Caco-2 (cell line): ENCODE measurements at regions of chr10 and their contacts with region 1.

Region 1: GRCh38 chr10:82089333-82089732 is 214.3 kb downstream of the NRG3 start:
- DNase-seq: no peak
- H3K4me3 ChIP-seq: no peak overlapping the region
- H3K4me3 Mint-ChIP-seq: no peak overlapping the region
- H3K27ac Mint-ChIP-seq: no peak overlapping the region
- H3K4me1 ChIP-seq: no peaks in the 10 kb centered on the region
- H3K4me1 Mint-ChIP-seq: no peaks in the 10 kb centered on the region
- H3K27me3 ChIP-seq: no peaks in the 10 kb centered on the region
- H3K27me3 Mint-ChIP-seq: no peaks in the 10 kb centered on the region
- CTCF ChIP-seq: no peak

Region 2: GRCh38 chr10:82075605-82076004 is 13.7 kb before region 1 on chr10:
- CTCF ChIA-PET with region 1: no interaction called
- POLR2A ChIA-PET with region 1: no interaction called
- intact Hi-C with region 1: no loop called
- DNase-seq: no peak
- H3K4me3 ChIP-seq: no peak overlapping the region
- H3K4me3 Mint-ChIP-seq: no peak overlapping the region
- H3K27ac Mint-ChIP-seq: no peak overlapping the region
- H3K4me1 ChIP-seq: no peaks in the 10 kb centered on the region
- H3K4me1 Mint-ChIP-seq: no peaks in the 10 kb centered on the region
- H3K27me3 ChIP-seq: no peaks in the 10 kb centered on the region
- H3K27me3 Mint-ChIP-seq: peaks cover 8% of the 10 kb centered on the region
- CTCF ChIP-seq: no peak

Region 3: GRCh38 chr10:82358486-82359099 is 269.3 kb after region 1 on chr10:
- CTCF ChIA-PET with region 1: no interaction called
- POLR2A ChIA-PET with region 1: no interaction called
- intact Hi-C with region 1: no loop called
- DNase-seq: no peak
- H3K4me3 ChIP-seq: no peak overlapping the region
- H3K4me3 Mint-ChIP-seq: no peak overlapping the region
- H3K27ac Mint-ChIP-seq: no peak overlapping the region
- H3K4me1 ChIP-seq: no peaks in the 10 kb centered on the region
- H3K4me1 Mint-ChIP-seq: no peaks in the 10 kb centered on the region
- H3K27me3 ChIP-seq: no peaks in the 10 kb centered on the region
- H3K27me3 Mint-ChIP-seq: no peaks in the 10 kb centered on the region
- CTCF ChIP-seq: no peak

Region 4: GRCh38 chr10:82847242-82847641 is 757.9 kb after region 1 on chr10:
- CTCF ChIA-PET with region 1: no interaction called
- POLR2A ChIA-PET with region 1: no interaction called
- intact Hi-C with region 1: loop called (anchors 10 kb)
- DNase-seq: no peak
- H3K4me3 ChIP-seq: no peak overlapping the region
- H3K4me3 Mint-ChIP-seq: no peak overlapping the region
- H3K27ac Mint-ChIP-seq: no peak overlapping the region
- H3K4me1 ChIP-seq: no peaks in the 10 kb centered on the region
- H3K4me1 Mint-ChIP-seq: no peaks in the 10 kb centered on the region
- H3K27me3 ChIP-seq: no peaks in the 10 kb centered on the region
- H3K27me3 Mint-ChIP-seq: peaks cover 3% of the 10 kb centered on the region
- CTCF ChIP-seq: no peak